Naive thymus-derived CD4-positive, alpha-beta T cell (primary cell): ENCODE measurements at regions of chr2 and their contacts with region 1.

Region 1: DNA sequence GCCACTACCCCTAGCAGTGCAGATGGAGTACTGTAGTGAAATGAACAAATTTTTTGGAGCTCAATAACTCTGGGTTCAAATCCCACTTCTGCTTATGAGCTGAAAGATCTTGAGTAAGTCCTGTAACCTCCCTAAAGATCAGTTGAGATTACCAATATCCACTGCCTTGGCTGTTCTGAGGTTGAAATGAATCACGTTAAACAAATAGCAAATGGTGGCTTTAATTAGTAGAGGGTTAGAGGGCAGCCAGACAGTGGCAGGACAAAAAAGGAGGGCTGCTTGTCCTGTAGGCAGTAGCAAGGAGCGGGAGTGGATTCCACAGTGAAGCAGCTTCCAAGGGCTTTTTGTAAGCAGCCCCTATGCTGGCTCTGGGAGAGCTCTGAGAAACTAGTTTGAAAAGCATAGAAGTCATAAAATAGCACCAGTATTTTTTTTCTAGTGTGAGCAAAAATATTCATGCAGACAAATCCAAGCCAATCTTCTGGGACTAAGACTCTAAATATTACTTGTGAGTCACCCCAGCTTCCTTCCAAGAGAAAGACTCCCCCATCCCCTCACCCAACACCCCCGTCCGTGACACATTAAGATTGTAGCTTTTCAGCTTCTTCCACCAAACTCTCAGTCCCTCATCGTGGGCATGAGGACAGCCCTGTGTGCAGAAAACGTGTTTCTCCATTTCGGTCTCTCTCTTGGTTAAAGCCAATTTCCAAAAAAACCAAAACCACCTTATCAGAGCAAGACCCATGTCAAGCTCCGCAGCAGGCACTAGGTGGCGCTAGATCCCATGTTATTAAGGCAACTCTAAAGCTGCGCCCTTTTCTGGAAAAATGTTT is 123.5 kb upstream of the LGALSL start:
- DNase-seq: peak; percentile 61 to 80 (median 73)
- ATAC-seq: peak; percentile 54
- H3K4me3 ChIP-seq: no peak overlapping the region
- H3K4me3 Mint-ChIP-seq: peak overlapping the region in 9 of 10 donors; percentile 53 to 86 (median 68)
- H3K27ac ChIP-seq: no peak overlapping the region
- H3K27ac Mint-ChIP-seq: peak overlapping the region in 8 of 9 donors; percentile 9 to 94 (median 84)
- H3K4me1 ChIP-seq: peaks cover 27 to 29% of the 10 kb centered on the region in 2 donors
- H3K4me1 Mint-ChIP-seq: peaks cover 17 to 52% (median 36%) of the 10 kb centered on the region in 7 donors
- H3K27me3 ChIP-seq: no peaks in the 10 kb centered on the region
- H3K27me3 Mint-ChIP-seq: peaks cover 0 to 3% (median 0%) of the 10 kb centered on the region in 5 donors

Region 2: GRCh38 chr2:64052468-64053241 is 277.8 kb before region 1 on chr2:
- CTCF ChIA-PET with region 1: interaction called, 289 read pairs
- POLR2A ChIA-PET with region 1: interaction called, 85 read pairs
- intact Hi-C with region 1: loop called (anchors 1 kb)
- DNase-seq: peak in 7 of 9 donors; percentile 14 to 63 (median 44)
- ATAC-seq: peak; percentile 48
- H3K4me3 ChIP-seq: no peak overlapping the region
- H3K4me3 Mint-ChIP-seq: peak overlapping the region in 9 of 10 donors; percentile 23 to 68 (median 53)
- H3K27ac ChIP-seq: no peak overlapping the region
- H3K27ac Mint-ChIP-seq: peak overlapping the region in 8 of 9 donors; percentile 38 to 92 (median 85)
- H3K4me1 ChIP-seq: peaks cover 3 to 37% of the 10 kb centered on the region in 2 donors
- H3K4me1 Mint-ChIP-seq: peaks cover 35 to 62% (median 54%) of the 10 kb centered on the region in 7 donors
- H3K27me3 ChIP-seq: no peaks in the 10 kb centered on the region
- H3K27me3 Mint-ChIP-seq: peaks cover 0 to 3% (median 0%) of the 10 kb centered on the region in 5 donors

Region 3: GRCh38 chr2:64222351-64222750 is 108.1 kb before region 1 on chr2:
- CTCF ChIA-PET with region 1: interaction called, 10 read pairs
- POLR2A ChIA-PET with region 1: interaction called, 18 read pairs
- intact Hi-C with region 1: no loop called
- DNase-seq: no peak
- ATAC-seq: no peak
- H3K4me3 ChIP-seq: no peak overlapping the region
- H3K4me3 Mint-ChIP-seq: peak overlapping the region in 4 of 10 donors; percentile 67 to 76 (median 70)
- H3K27ac ChIP-seq: no peak overlapping the region
- H3K27ac Mint-ChIP-seq: peak overlapping the region in 7 of 9 donors; percentile 22 to 93 (median 89)
- H3K4me1 ChIP-seq: peaks cover 0 to 23% of the 10 kb centered on the region in 2 donors
- H3K4me1 Mint-ChIP-seq: peaks cover 16 to 72% (median 37%) of the 10 kb centered on the region in 7 donors
- H3K27me3 ChIP-seq: no peaks in the 10 kb centered on the region
- H3K27me3 Mint-ChIP-seq: no peaks in the 10 kb centered on the region

Region 4: GRCh38 chr2:64344976-64345576 is 14.6 kb after region 1 on chr2:
- CTCF ChIA-PET with region 1: interaction called, 10 read pairs
- POLR2A ChIA-PET with region 1: interaction called, 3 read pairs
- intact Hi-C with region 1: no loop called
- DNase-seq: no peak
- ATAC-seq: no peak
- H3K4me3 ChIP-seq: no peak overlapping the region
- H3K4me3 Mint-ChIP-seq: no peak overlapping the region
- H3K27ac ChIP-seq: no peak overlapping the region
- H3K27ac Mint-ChIP-seq: no peak overlapping the region
- H3K4me1 ChIP-seq: no peaks in the 10 kb centered on the region
- H3K4me1 Mint-ChIP-seq: no peaks in the 10 kb centered on the region
- H3K27me3 ChIP-seq: no peaks in the 10 kb centered on the region
- H3K27me3 Mint-ChIP-seq: peaks cover 0 to 17% (median 5%) of the 10 kb centered on the region in 5 donors

Region 5: DNA sequence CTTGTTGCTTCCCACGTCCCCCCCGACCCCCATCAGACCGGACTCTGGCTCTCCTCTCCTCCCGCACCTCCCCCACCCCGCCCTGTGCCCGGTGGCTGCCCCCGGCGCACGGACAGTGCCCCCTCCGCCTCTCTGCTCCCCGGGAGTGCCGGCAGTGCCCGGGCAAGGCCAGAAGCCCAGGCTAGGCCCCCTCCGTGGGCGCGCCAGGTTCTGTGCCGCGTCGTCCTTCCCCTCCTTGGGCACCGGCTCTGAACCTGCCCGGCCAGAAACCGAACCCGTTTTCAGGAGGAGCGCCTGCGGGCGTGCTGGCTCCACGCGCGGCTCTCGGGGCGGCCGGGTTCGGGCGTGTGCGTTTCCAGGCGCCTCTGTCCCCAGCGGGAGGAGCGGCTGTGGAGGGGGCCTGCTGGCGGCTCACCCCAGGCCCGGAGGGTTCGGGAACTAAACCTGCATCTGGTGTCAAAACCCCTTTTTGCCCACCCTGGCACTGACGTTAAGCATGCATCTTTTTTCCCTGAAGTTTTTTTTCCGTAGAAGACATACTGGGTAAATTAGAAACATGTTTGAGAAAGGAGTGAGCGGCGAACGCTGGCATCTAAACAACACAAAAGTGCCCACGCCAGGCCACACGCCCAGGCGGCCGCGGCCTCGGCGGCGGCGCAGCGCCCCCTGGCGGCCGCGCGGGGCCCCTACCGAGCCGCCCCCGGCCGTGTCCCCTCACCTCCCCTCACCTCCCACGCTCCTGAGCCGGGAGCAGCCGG is 534.8 kb after region 1 on chr2:
- CTCF ChIA-PET with region 1: interaction called, 4 read pairs
- POLR2A ChIA-PET with region 1: no interaction called
- intact Hi-C with region 1: loop called (anchors 2 kb)
- DNase-seq: peak; percentile 30 to 82 (median 72)
- ATAC-seq: peak; percentile 87
- H3K4me3 ChIP-seq: peak overlapping the region; percentile 88
- H3K4me3 Mint-ChIP-seq: peak overlapping the region in 7 of 10 donors; percentile 72 to 86 (median 81)
- H3K27ac ChIP-seq: peak overlapping the region; percentile 40
- H3K27ac Mint-ChIP-seq: no peak overlapping the region
- H3K4me1 ChIP-seq: peaks cover 0 to 5% of the 10 kb centered on the region in 2 donors
- H3K4me1 Mint-ChIP-seq: peaks cover 0 to 5% (median 0%) of the 10 kb centered on the region in 7 donors
- H3K27me3 ChIP-seq: peaks cover 0 to 3% of the 10 kb centered on the region in 2 donors
- H3K27me3 Mint-ChIP-seq: peaks cover 0 to 17% (median 8%) of the 10 kb centered on the region in 5 donors

Region 6: DNA sequence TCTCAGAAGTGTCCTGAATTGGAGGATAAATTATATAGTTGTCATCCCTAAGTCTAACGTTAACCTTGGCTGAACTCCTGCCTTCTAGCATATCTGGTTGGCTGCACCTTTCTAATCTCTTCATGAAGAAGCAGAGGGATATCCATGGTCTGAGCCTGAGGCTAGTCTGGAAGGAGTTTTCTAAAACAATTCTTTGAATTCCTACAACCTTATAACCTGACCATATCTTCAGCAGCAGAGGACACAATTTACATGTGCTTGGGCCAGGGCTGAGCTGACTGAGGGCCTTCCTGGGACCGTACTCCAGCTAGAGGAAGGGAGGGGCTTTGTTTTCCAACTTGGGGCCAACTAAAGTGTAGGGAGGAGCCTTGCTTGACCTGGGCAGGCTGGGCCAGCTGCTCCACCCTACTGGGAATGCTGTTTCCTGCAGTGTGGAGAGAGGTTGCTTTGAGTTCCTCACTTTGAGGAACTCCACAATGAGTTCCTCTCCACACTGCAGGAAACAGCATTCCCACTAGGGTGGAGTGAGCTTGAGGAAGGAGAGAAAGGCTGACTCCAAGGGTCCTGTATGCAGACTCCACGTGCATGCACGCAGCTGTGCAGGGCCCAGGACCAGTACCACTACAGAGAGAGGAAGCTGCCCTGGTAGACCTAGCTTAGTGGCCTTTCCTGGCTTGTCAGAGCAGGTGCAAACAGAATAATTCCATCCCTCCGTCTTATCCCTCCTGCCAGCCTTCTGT is 745.3 kb after region 1 on chr2:
- CTCF ChIA-PET with region 1: no interaction called
- POLR2A ChIA-PET with region 1: no interaction called
- intact Hi-C with region 1: no loop called
- DNase-seq: no peak
- ATAC-seq: no peak
- H3K4me3 ChIP-seq: no peak overlapping the region
- H3K4me3 Mint-ChIP-seq: no peak overlapping the region
- H3K27ac ChIP-seq: no peak overlapping the region
- H3K27ac Mint-ChIP-seq: peak overlapping the region in 7 of 9 donors; percentile 44 to 84 (median 50)
- H3K4me1 ChIP-seq: no peaks in the 10 kb centered on the region
- H3K4me1 Mint-ChIP-seq: peaks cover 0 to 5% (median 0%) of the 10 kb centered on the region in 7 donors
- H3K27me3 ChIP-seq: no peaks in the 10 kb centered on the region
- H3K27me3 Mint-ChIP-seq: no peaks in the 10 kb centered on the region

Region 7: GRCh38 chr2:65227425-65228262 is 897.1 kb after region 1 on chr2 and contains the start of gene ACTR2:
- CTCF ChIA-PET with region 1: no interaction called
- POLR2A ChIA-PET with region 1: no interaction called
- intact Hi-C with region 1: loop called in 1 of 2 experiments (anchors 2 kb)
- DNase-seq: peak; percentile 86 to 94 (median 93)
- ATAC-seq: peak; percentile 97
- H3K4me3 ChIP-seq: peak within 1 kb of the TSS; percentile 99
- H3K4me3 Mint-ChIP-seq: peak within 1 kb of the TSS; percentile 95 to 100 (median 98)
- H3K27ac ChIP-seq: peak within 1 kb of the TSS; percentile 97
- H3K27ac Mint-ChIP-seq: peak within 1 kb of the TSS; percentile 97 to 99 (median 98)
- H3K4me1 ChIP-seq: peaks cover 25 to 38% of the 10 kb centered on the region in 2 donors
- H3K4me1 Mint-ChIP-seq: peaks cover 24 to 54% (median 44%) of the 10 kb centered on the region in 7 donors
- H3K27me3 ChIP-seq: no peaks in the 10 kb centered on the region
- H3K27me3 Mint-ChIP-seq: no peaks in the 10 kb centered on the region
- total RNA-seq, gene ACTR2: 180 to 435 (median 287) TPM